Heart left ventricle (tissue), 16 donors: ENCODE measurements at regions of chr9 and their contacts with region 1.

Region 1: GRCh38 chr9:25472140-25472539 is 206.1 kb downstream of the TUSC1 start:
- DNase-seq: no peak
- ATAC-seq: no peak
- H3K4me3 ChIP-seq: no peak overlapping the region
- H3K27ac ChIP-seq: no peak overlapping the region
- H3K4me1 ChIP-seq: no peaks in the 10 kb centered on the region
- H3K27me3 ChIP-seq: no peaks in the 10 kb centered on the region
- CTCF ChIP-seq: no peak
- POLR2A ChIP-seq: no peak

Region 2: DNA sequence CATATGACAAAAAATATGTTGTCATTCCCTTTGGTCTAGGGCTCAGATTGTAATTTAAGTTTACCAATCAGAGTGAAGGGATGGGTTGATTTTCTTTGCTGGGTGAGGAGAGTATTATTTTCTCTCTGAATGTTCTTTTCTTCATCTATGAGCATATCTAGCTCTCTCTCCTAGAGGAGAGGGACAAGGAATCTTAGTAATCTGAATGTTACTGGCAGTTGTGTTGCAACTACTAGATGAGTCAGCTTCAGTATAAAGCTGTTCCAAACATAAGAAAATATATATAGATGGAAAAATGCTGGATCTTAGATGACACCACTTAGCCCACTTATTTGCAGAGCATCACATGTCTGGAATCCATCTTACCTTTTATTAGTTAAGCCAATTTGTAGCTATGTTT is 53.2 kb before region 1 on chr9:
- intact Hi-C with region 1: loop called in 1 of 10 experiments (anchors 10 kb)
- DNase-seq: no peak
- ATAC-seq: no peak
- H3K4me3 ChIP-seq: no peak overlapping the region
- H3K27ac ChIP-seq: no peak overlapping the region
- H3K4me1 ChIP-seq: no peaks in the 10 kb centered on the region
- H3K27me3 ChIP-seq: peaks cover 0 to 4% (median 0%) of the 10 kb centered on the region in 9 donors
- CTCF ChIP-seq: no peak
- POLR2A ChIP-seq: no peak

Region 3: GRCh38 chr9:25716220-25716872 is 244.2 kb after region 1 on chr9:
- intact Hi-C with region 1: no loop called
- DNase-seq: peak in 1 of 5 donors; percentile 20
- ATAC-seq: peak; percentile 54 to 78 (median 55)
- H3K4me3 ChIP-seq: no peak overlapping the region
- H3K27ac ChIP-seq: no peak overlapping the region
- H3K4me1 ChIP-seq: no peaks in the 10 kb centered on the region
- H3K27me3 ChIP-seq: no peaks in the 10 kb centered on the region
- CTCF ChIP-seq: peak in 9 of 12 donors; percentile 13 to 56 (median 35)
- POLR2A ChIP-seq: no peak